Activated T-helper 1 cell treated with anti-CD3 and anti-CD28 coated beads, Interleukin-12 subunit alpha, Interleukin-12 subunit beta, Interleukin-2, Interleukin-4 antibody, amounts not matched to agents 30 ng/mL and 10 ng/mL and 1 ng/mL, durations not matched to agents 14 hours and 24 hours and 36 hours (primary cell): ENCODE measurements at regions of chr9 and their contacts with region 1.

Region 1: GRCh38 chr9:116687074-116687753 is at the start of gene TRIM32:
- DNase-seq: peak; percentile 91
- H3K4me3 Mint-ChIP-seq: peak within 1 kb of the TSS; percentile 90
- H3K27ac Mint-ChIP-seq: peak within 1 kb of the TSS; percentile 85
- H3K4me1 Mint-ChIP-seq: peaks cover 52% of the 10 kb centered on the region
- H3K27me3 Mint-ChIP-seq: no peaks in the 10 kb centered on the region
- total RNA-seq, gene TRIM32: 16.0 and 18.2 TPM in 2 replicates

Region 2: DNA sequence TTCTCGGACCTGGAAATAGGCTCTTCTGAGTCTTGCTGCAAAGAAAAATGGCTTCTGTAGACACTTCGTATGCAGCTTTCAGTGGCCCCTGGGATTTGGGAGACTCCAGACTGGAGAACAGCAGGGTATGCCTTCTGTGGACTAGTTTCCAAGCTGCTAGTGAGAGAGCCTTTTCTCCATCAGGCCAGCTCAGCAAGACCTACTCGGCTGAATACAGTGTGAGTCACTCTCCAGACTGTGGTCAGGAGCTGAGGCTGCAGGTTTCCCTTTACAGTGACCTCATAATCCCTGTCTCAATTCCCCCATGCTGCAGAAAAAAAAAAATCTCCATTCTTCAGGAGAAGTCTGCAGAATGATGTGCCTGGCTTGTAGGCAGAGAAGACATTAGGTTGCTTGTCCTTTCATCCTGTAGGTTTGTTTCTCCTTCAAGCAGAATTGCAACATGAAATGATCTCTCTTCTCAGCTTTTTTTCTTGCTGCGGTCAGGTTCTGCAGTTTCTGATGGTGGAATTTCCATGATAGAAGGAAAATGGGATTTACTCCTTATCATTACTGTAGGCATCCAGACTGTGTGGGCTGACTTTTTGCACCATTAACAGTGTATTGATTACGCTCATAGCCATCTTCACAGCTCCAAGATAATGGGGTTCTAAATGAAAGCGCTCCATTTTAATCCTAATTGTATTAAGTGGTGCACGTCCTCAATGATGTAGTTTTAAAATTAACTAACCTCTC is 1678.5 kb before region 1 on chr9:
- intact Hi-C with region 1: loop called (anchors 10 kb)
- DNase-seq: peak; percentile 23
- H3K4me3 Mint-ChIP-seq: no peak overlapping the region
- H3K27ac Mint-ChIP-seq: no peak overlapping the region
- H3K4me1 Mint-ChIP-seq: peaks cover 97% of the 10 kb centered on the region
- H3K27me3 Mint-ChIP-seq: no peaks in the 10 kb centered on the region

Region 3: GRCh38 chr9:116700882-116701865 is 14.0 kb after region 1 on chr9:
- intact Hi-C with region 1: loop called (anchors 1 kb)
- DNase-seq: no peak
- H3K4me3 Mint-ChIP-seq: peak overlapping the region; percentile 8
- H3K27ac Mint-ChIP-seq: peak overlapping the region; percentile 8
- H3K4me1 Mint-ChIP-seq: peaks cover 22% of the 10 kb centered on the region
- H3K27me3 Mint-ChIP-seq: no peaks in the 10 kb centered on the region